Sciatic nerve (tissue), 2 donors: ENCODE measurements at regions of chr11 and their contacts with region 1.

Region 1: GRCh38 chr11:30821438-30821965 is 235.3 kb upstream of the MPPED2 start:
- DNase-seq: no peak
- ATAC-seq: no peak

Region 2: GRCh38 chr11:29389793-29390192 is 1431.7 kb before region 1 on chr11:
- intact Hi-C with region 1: loop called (anchors 5 kb)
- DNase-seq: no peak
- ATAC-seq: no peak

Region 3: DNA sequence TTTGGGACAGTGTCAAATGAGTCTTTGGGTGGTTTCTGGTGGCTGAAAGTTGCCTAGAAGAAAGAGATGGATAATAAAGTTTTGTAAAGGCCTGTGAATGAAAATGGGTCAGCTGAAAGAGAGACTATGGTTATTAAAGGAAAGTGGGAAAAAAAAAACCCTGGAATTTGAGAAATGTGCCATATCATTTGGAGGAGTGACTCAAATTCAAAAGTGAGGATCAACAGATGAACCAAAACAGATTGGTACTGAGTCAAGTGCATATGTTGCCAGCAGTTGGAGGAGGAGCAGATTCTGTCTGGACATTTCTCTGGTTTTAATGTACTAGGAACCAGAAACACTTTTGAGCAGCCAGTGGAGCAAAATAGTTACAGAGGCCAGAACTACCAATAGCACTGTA is 1144.5 kb before region 1 on chr11:
- intact Hi-C with region 1: no loop called
- DNase-seq: no peak
- ATAC-seq: no peak